ENCODE measurements at regions of chr10 and their contacts with region 1.

Region 1: DNA sequence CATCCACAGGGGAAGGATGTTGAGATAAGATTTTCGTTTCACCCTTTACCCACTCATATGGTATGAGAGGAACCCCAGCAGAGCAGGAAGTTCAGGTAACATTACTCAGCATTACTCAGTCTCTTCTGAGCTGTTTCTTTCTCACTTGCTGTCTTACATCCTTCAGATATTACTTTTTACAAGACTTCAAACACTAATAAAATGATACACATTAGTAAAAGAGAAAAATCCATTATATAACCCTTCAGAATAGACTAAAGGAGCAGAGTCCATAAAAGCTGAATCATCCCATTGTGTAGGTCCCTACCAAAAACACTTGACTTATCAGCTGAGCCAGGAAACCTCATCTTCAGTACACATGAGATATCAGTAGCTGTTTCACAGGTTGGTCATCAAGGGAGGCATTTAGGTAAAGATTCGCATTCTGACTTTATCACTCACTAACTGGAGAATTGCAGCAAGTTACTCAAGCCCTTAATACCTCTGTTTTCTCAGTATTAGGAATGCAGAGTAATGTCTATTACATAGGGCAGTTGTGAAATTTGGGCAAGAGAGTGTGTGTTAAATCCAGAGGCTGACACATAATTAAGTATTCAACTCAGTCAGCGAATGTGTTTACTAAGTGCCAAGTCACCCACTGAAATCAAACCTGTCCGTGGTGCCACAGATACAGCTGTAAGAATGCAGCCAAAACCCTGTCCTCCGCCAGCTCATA is 44.7 kb downstream of the KLF6 start:
- DNase-seq: no peak
- H3K4me3 Mint-ChIP-seq: no peak overlapping the region
- H3K27ac Mint-ChIP-seq: peak overlapping the region; percentile 7
- H3K4me1 Mint-ChIP-seq: peaks cover 30% of the 10 kb centered on the region
- H3K27me3 Mint-ChIP-seq: no peaks in the 10 kb centered on the region

Region 2: GRCh38 chr10:3805791-3806461 is 65.6 kb after region 1 on chr10:
- intact Hi-C with region 1: loop called (anchors 2 kb)
- DNase-seq: no peak
- H3K4me3 Mint-ChIP-seq: peak overlapping the region; percentile 70
- H3K27ac Mint-ChIP-seq: peak overlapping the region; percentile 99
- H3K4me1 Mint-ChIP-seq: peaks cover 76% of the 10 kb centered on the region
- H3K27me3 Mint-ChIP-seq: no peaks in the 10 kb centered on the region

Region 3: GRCh38 chr10:3852147-3852904 is 112.0 kb after region 1 on chr10:
- intact Hi-C with region 1: no loop called
- DNase-seq: peak; percentile 58
- H3K4me3 Mint-ChIP-seq: peak overlapping the region; percentile 52
- H3K27ac Mint-ChIP-seq: peak overlapping the region; percentile 92
- H3K4me1 Mint-ChIP-seq: peaks cover 37% of the 10 kb centered on the region
- H3K27me3 Mint-ChIP-seq: no peaks in the 10 kb centered on the region

Measured in activated T-helper 1 cell treated with anti-CD3 and anti-CD28 coated beads, Interleukin-12 subunit alpha, Interleukin-12 subunit beta, Interleukin-2, Interleukin-4 antibody, amounts not matched to agents 30 ng/mL and 10 ng/mL and 1 ng/mL, durations not matched to agents 14 hours and 24 hours and 36 hours (primary cell).